ENCODE measurements at regions of chr2 and their contacts with region 1.

Region 1: DNA sequence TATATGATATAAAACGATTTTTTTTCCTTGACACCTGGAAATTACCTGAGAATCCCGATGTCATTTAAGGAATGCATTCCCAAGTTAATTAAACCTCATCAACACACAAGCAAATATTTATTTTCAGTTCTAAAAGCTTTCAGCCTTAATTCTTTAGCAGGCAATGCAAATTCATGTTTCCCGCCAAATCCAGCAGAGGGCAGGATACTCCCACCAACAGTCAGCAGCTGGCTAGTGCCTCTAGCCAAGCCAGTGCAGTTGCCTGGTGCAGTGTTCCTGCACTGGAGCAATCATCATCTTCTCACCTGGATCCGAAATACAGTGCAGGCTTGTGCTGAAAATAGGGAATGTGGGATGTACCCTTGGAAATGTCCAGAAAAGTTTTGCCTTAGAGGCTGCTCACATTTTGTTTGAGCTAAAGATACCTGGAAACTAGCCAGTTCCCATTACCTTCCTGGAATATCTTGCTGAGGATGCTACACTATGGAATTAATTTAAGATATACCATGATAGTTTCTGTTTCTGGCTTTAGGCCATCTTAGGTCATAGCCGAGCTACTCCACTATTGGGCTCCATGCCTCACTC is 48.4 kb upstream of the CYTIP start:
- DNase-seq: peak; percentile 36
- ATAC-seq: peak; percentile 99
- H3K4me3 Mint-ChIP-seq: no peak overlapping the region
- H3K27ac Mint-ChIP-seq: peak overlapping the region; percentile 50
- H3K4me1 Mint-ChIP-seq: peaks cover 20% of the 10 kb centered on the region
- H3K27me3 Mint-ChIP-seq: no peaks in the 10 kb centered on the region
- CTCF ChIP-seq: peak; percentile 58

Region 2: GRCh38 chr2:157312866-157313486 is 179.3 kb before region 1 on chr2:
- CTCF ChIA-PET with region 1: no interaction called
- POLR2A ChIA-PET with region 1: no interaction called
- intact Hi-C with region 1: no loop called
- DNase-seq: no peak
- ATAC-seq: no peak
- H3K4me3 Mint-ChIP-seq: no peak overlapping the region
- H3K27ac Mint-ChIP-seq: no peak overlapping the region
- H3K4me1 Mint-ChIP-seq: no peaks in the 10 kb centered on the region
- H3K27me3 Mint-ChIP-seq: no peaks in the 10 kb centered on the region
- CTCF ChIP-seq: no peak

Region 3: DNA sequence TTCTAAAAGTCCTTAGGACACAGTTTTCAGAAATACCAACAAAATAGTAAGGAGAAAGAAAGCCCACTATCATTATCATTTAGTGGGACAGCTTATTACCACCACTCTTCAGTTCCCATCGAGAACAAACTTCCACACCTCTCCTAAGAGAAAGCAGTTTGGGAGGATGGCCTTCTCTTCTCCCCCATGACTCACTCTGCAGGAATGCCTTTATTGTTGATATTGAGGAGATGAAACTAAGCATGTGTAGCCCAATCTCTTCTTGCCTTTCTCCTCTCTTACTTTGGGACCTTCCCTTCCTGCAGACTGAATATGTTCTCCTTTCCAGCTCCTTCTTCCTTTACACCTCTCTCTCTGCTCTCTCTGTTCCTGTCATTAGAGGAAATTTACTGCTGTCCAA is 136.7 kb before region 1 on chr2:
- CTCF ChIA-PET with region 1: no interaction called
- POLR2A ChIA-PET with region 1: no interaction called
- intact Hi-C with region 1: no loop called
- DNase-seq: no peak
- ATAC-seq: no peak
- H3K4me3 Mint-ChIP-seq: no peak overlapping the region
- H3K27ac Mint-ChIP-seq: no peak overlapping the region
- H3K4me1 Mint-ChIP-seq: peaks cover 11% of the 10 kb centered on the region
- H3K27me3 Mint-ChIP-seq: no peaks in the 10 kb centered on the region
- CTCF ChIP-seq: no peak

Region 4: DNA sequence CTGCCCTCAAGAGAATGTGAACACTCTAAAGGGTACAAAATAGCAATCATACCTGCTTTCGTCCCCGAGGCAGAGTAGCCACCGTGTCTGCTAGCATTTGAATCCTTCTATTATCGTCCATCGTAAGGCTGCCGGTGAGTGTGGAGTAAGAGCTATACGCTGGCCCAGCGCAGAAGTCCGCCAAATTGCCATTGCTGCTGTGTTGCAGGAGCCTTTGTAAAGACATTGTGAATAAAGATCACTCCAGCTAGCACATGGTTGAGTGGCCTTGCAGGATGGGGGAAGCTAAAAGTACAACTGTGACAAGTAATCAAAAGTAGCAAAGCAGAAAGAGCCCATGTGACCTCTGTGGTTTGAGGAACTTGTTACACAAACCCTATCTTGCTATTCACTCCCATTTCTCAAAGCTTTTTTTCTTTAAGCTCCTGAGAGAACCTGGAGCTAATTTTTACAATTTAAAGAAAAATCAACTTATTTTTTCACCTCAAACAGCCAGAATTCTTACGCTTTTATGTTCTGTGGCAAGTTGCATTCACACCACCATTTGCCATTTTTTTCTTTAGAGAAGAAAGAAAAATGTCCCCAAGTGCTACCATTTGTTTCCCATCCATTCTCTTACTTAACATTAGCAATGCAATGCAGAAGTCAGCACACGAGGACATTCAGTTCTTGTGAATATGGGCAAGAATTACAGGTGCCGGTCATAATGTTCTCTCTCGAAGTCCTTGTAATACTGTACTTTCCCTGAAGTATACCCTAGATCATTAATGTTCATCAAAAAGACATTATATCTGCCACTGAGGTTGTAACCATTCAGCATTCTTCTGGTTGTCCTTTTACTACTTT is 48.3 kb before region 1 on chr2 and contains the start of gene CYTIP:
- CTCF ChIA-PET with region 1: interaction called, 16 read pairs
- POLR2A ChIA-PET with region 1: interaction called, 5 read pairs
- intact Hi-C with region 1: loop called (anchors 1 kb)
- DNase-seq: peak; percentile 52
- ATAC-seq: peak; percentile 53
- H3K4me3 Mint-ChIP-seq: peak within 1 kb of the TSS; percentile 95
- H3K27ac Mint-ChIP-seq: peak within 1 kb of the TSS; percentile 96
- H3K4me1 Mint-ChIP-seq: peaks cover 61% of the 10 kb centered on the region
- H3K27me3 Mint-ChIP-seq: no peaks in the 10 kb centered on the region
- CTCF ChIP-seq: no peak
- total RNA-seq, gene CYTIP: 129 and 130 TPM in 2 replicates

Region 5: GRCh38 chr2:157504623-157505022 is 12.3 kb after region 1 on chr2:
- CTCF ChIA-PET with region 1: interaction called, 12 read pairs
- POLR2A ChIA-PET with region 1: interaction called, 3 read pairs
- intact Hi-C with region 1: loop called (anchors 1 kb)
- DNase-seq: no peak
- ATAC-seq: no peak
- H3K4me3 Mint-ChIP-seq: no peak overlapping the region
- H3K27ac Mint-ChIP-seq: no peak overlapping the region
- H3K4me1 Mint-ChIP-seq: peaks cover 41% of the 10 kb centered on the region
- H3K27me3 Mint-ChIP-seq: peaks cover 2% of the 10 kb centered on the region
- CTCF ChIP-seq: no peak

Region 6: GRCh38 chr2:157572725-157573124 is 80.4 kb after region 1 on chr2:
- CTCF ChIA-PET with region 1: no interaction called
- POLR2A ChIA-PET with region 1: no interaction called
- intact Hi-C with region 1: no loop called
- DNase-seq: no peak
- ATAC-seq: peak; percentile 31
- H3K4me3 Mint-ChIP-seq: no peak overlapping the region
- H3K27ac Mint-ChIP-seq: no peak overlapping the region
- H3K4me1 Mint-ChIP-seq: peaks cover 5% of the 10 kb centered on the region
- H3K27me3 Mint-ChIP-seq: peaks cover 1% of the 10 kb centered on the region
- CTCF ChIP-seq: no peak

Region 7: GRCh38 chr2:157596992-157597681 is 104.9 kb after region 1 on chr2:
- CTCF ChIA-PET with region 1: interaction called, 20 read pairs
- POLR2A ChIA-PET with region 1: no interaction called
- intact Hi-C with region 1: loop called (anchors 1 kb)
- DNase-seq: peak; percentile 42
- ATAC-seq: peak; percentile 80
- H3K4me3 Mint-ChIP-seq: peak overlapping the region; percentile 41
- H3K27ac Mint-ChIP-seq: no peak overlapping the region
- H3K4me1 Mint-ChIP-seq: peaks cover 8% of the 10 kb centered on the region
- H3K27me3 Mint-ChIP-seq: peaks cover 3% of the 10 kb centered on the region
- CTCF ChIP-seq: no peak

Region 8: DNA sequence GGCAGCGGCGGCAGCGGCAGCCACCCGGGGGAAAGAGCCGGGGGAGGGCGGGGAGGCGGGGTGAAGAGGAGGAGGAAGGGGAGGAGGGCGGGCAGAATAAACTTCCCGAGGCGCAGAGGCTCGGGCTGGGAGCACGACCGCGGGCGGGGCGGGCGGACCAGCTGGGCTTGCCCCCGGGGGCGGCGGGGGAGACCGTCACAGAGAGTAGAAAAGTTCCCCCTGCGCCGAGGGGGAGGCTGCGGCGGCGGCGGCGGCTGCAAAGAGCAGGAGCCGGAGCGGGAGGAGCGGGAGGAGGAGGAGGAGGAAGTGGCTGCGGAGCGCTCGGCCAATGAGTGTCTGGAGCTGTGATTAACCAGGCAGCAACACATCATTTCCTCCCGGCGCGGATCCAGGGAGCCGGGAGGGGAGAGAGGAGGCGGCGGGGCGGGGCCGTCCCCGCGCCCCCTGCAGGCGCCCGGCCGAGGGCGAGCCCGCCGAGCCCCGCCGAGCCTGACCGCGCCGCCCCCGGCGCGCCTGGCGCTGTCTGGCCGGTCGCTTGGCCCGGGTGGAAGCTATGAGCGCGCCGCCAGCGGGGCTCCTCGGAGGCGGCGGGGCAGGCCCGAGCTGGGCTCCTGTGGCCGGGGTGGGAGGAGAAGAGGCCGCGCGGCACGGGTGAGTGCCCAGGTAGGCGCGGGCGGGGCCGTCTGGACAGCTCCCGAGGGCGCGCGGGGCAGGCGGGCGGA is 383.9 kb after region 1 on chr2 and contains the start of gene ACVR1:
- CTCF ChIA-PET with region 1: no interaction called
- POLR2A ChIA-PET with region 1: no interaction called
- intact Hi-C with region 1: loop called (anchors 5 kb)
- DNase-seq: peak; percentile 76
- ATAC-seq: peak; percentile 80
- H3K4me3 Mint-ChIP-seq: peak within 1 kb of the TSS; percentile 88
- H3K27ac Mint-ChIP-seq: peak within 1 kb of the TSS; percentile 76
- H3K4me1 Mint-ChIP-seq: peaks cover 21% of the 10 kb centered on the region
- H3K27me3 Mint-ChIP-seq: no peaks in the 10 kb centered on the region
- CTCF ChIP-seq: no peak
- total RNA-seq, gene ACVR1: 4.4 and 4.6 TPM in 2 replicates

Region 9: DNA sequence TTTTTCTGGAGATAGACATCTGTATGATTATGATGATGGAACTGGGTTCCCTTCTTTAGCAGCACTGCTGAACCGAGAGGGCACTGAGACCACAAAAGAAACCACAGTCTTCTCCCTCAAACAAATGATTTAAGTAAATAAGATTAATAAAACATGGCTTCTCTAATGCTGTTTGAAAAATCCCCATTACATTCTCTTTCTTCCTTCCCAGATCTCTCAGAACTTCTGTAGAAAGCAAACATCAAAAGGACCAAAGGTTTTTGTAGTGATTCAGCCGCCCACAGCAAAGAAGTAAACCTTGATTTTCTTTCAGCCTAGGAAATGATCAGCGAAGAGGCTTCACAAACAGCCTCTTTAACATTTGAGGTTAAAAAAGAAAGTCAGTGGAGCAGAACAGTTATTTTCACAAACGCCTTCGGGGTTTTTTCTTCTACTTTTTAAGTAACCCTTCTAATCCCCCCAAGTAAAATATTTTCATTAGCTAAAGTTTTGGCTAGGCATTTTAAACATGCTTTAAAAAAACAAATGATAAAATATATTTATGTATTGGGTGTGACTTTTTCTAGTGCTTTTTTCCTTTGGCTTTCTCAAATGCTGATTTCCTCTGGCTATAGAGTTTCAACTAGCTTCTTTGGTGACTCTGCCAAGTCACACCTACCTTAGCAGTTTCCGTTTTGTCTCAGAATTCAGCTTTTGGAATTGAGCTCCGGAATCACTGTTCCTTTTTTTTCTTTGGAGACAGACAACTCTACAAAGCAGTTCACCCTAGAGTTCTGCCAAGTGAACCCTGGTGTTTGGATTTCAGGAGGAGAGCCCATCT is 699.0 kb after region 1 on chr2:
- CTCF ChIA-PET with region 1: no interaction called
- POLR2A ChIA-PET with region 1: no interaction called
- intact Hi-C with region 1: loop called (anchors 10 kb)
- DNase-seq: no peak
- ATAC-seq: peak; percentile 82
- H3K4me3 Mint-ChIP-seq: peak overlapping the region; percentile 80
- H3K27ac Mint-ChIP-seq: peak overlapping the region; percentile 94
- H3K4me1 Mint-ChIP-seq: peaks cover 31% of the 10 kb centered on the region
- H3K27me3 Mint-ChIP-seq: no peaks in the 10 kb centered on the region
- CTCF ChIP-seq: no peak

Measured in activated B cell treated with CpG ODN at 0.5 μM for 24 hours (primary cell).